CD14-positive monocyte (primary cell): ENCODE measurements at regions of chr20 and their contacts with region 1.

Region 1: GRCh38 chr20:49534255-49534712 is 33.7 kb downstream of the PTGIS start:
- DNase-seq: peak; percentile 26 to 58 (median 46)
- H3K4me3 ChIP-seq: no peak overlapping the region
- H3K4me3 Mint-ChIP-seq: peak overlapping the region in 1 of 2 donors; percentile 35
- H3K27ac ChIP-seq: no peak overlapping the region
- H3K27ac Mint-ChIP-seq: no peak overlapping the region
- H3K4me1 ChIP-seq: peaks cover 7 to 12% of the 10 kb centered on the region in 2 donors
- H3K4me1 Mint-ChIP-seq: peaks cover 11% of the 10 kb centered on the region
- H3K27me3 ChIP-seq: no peaks in the 10 kb centered on the region
- H3K27me3 Mint-ChIP-seq: peaks cover 4 to 8% (median 5%) of the 10 kb centered on the region in 3 donors
- CTCF ChIP-seq: peak; percentile 97

Region 2: GRCh38 chr20:49330544-49331239 is 203.6 kb before region 1 on chr20:
- intact Hi-C with region 1: loop called (anchors 5 kb)
- DNase-seq: no peak
- H3K4me3 ChIP-seq: no peak overlapping the region
- H3K4me3 Mint-ChIP-seq: no peak overlapping the region
- H3K27ac ChIP-seq: no peak overlapping the region
- H3K27ac Mint-ChIP-seq: no peak overlapping the region
- H3K4me1 ChIP-seq: no peaks in the 10 kb centered on the region
- H3K4me1 Mint-ChIP-seq: peaks cover 5% of the 10 kb centered on the region
- H3K27me3 ChIP-seq: no peaks in the 10 kb centered on the region
- H3K27me3 Mint-ChIP-seq: peaks cover 5 to 9% (median 7%) of the 10 kb centered on the region in 3 donors
- CTCF ChIP-seq: no peak

Region 3: GRCh38 chr20:49338061-49338460 is 196.2 kb before region 1 on chr20:
- intact Hi-C with region 1: loop called (anchors 5 kb)
- DNase-seq: no peak
- H3K4me3 ChIP-seq: no peak overlapping the region
- H3K4me3 Mint-ChIP-seq: no peak overlapping the region
- H3K27ac ChIP-seq: no peak overlapping the region
- H3K27ac Mint-ChIP-seq: no peak overlapping the region
- H3K4me1 ChIP-seq: no peaks in the 10 kb centered on the region
- H3K4me1 Mint-ChIP-seq: peaks cover 2% of the 10 kb centered on the region
- H3K27me3 ChIP-seq: no peaks in the 10 kb centered on the region
- H3K27me3 Mint-ChIP-seq: peaks cover 1 to 7% (median 7%) of the 10 kb centered on the region in 3 donors
- CTCF ChIP-seq: no peak